ENCODE measurements at regions of chr12 and their contacts with region 1.

Region 1: GRCh38 chr12:103503977-103504376 is 8.2 kb upstream of the C12orf42 start:
- DNase-seq: peak in 1 of 2 experiments; percentile 76
- H3K4me3 ChIP-seq: no peak overlapping the region
- H3K27ac ChIP-seq: no peak overlapping the region
- H3K4me1 ChIP-seq: no peaks in the 10 kb centered on the region
- H3K27me3 ChIP-seq: no peaks in the 10 kb centered on the region
- CTCF ChIP-seq: peak; percentile 75 to 82 (median 77)
- EP300 ChIP-seq: no peak
- POLR2A ChIP-seq: no peak
- RAD21 ChIP-seq: peak; percentile 76 to 84

Region 2: GRCh38 chr12:102948941-102949352 is 555.0 kb before region 1 on chr12:
- CTCF ChIA-PET with region 1: interaction called, 15 read pairs
- POLR2A ChIA-PET with region 1: no interaction called
- DNase-seq: peak in 1 of 2 experiments; percentile 94
- H3K4me3 ChIP-seq: no peak overlapping the region
- H3K27ac ChIP-seq: no peak overlapping the region
- H3K4me1 ChIP-seq: peaks cover 5 to 14% (median 6%) of the 10 kb centered on the region in 4 experiments
- H3K27me3 ChIP-seq: peaks cover 42 to 54% (median 49%) of the 10 kb centered on the region in 4 experiments
- CTCF ChIP-seq: peak; percentile 83 to 91 (median 84)
- EP300 ChIP-seq: no peak
- POLR2A ChIP-seq: no peak
- RAD21 ChIP-seq: peak; percentile 95

Region 3: GRCh38 chr12:103326190-103326589 is 177.8 kb before region 1 on chr12:
- CTCF ChIA-PET with region 1: interaction called, 10 read pairs
- POLR2A ChIA-PET with region 1: no interaction called
- DNase-seq: no peak
- H3K4me3 ChIP-seq: no peak overlapping the region
- H3K27ac ChIP-seq: no peak overlapping the region
- H3K4me1 ChIP-seq: no peaks in the 10 kb centered on the region
- H3K27me3 ChIP-seq: no peaks in the 10 kb centered on the region
- CTCF ChIP-seq: peak in 2 of 3 experiments; percentile 58 to 67; a peak in 3 of 4 replicates
- EP300 ChIP-seq: no peak
- POLR2A ChIP-seq: no peak
- RAD21 ChIP-seq: peak; percentile 71 to 78

Region 4: DNA sequence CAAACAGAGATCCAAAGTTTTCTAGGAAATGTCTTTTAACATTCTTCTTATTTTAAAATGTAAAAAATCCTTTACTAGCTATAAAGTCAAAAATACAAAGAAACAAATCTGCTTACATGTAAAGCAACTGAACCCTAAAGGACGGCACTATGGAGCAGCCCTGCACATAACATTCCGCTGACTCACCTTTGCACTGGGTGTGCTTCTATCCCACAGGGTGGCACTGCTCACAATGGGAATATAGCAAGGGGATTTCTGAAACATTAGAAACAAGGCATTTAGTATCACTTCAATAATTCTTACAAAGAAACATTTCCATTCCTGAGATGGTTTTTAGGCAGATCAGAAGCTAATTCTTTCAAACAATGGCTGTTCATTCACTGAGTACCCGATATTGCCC is 102.6 kb before region 1 on chr12:
- CTCF ChIA-PET with region 1: interaction called, 19 read pairs
- POLR2A ChIA-PET with region 1: no interaction called
- DNase-seq: peak in 1 of 2 experiments; percentile 9
- H3K4me3 ChIP-seq: no peak overlapping the region
- H3K27ac ChIP-seq: no peak overlapping the region
- H3K4me1 ChIP-seq: peaks cover 0 to 5% (median 1%) of the 10 kb centered on the region in 4 experiments; a peak in 2 of 7 replicates
- H3K27me3 ChIP-seq: no peaks in the 10 kb centered on the region
- CTCF ChIP-seq: peak; percentile 2 to 28 (median 6); a peak in 2 of 4 replicates
- EP300 ChIP-seq: no peak
- POLR2A ChIP-seq: no peak
- RAD21 ChIP-seq: peak; percentile 48

Region 5: GRCh38 chr12:103523771-103524170 is 19.8 kb after region 1 on chr12:
- CTCF ChIA-PET with region 1: interaction called, 21 read pairs
- POLR2A ChIA-PET with region 1: no interaction called
- DNase-seq: no peak
- H3K4me3 ChIP-seq: no peak overlapping the region
- H3K27ac ChIP-seq: no peak overlapping the region
- H3K4me1 ChIP-seq: no peaks in the 10 kb centered on the region
- H3K27me3 ChIP-seq: no peaks in the 10 kb centered on the region
- CTCF ChIP-seq: no peak
- EP300 ChIP-seq: no peak
- POLR2A ChIP-seq: no peak
- RAD21 ChIP-seq: no peak